ENCODE measurements at regions of chr15 and their contacts with region 1.

Region 1: DNA sequence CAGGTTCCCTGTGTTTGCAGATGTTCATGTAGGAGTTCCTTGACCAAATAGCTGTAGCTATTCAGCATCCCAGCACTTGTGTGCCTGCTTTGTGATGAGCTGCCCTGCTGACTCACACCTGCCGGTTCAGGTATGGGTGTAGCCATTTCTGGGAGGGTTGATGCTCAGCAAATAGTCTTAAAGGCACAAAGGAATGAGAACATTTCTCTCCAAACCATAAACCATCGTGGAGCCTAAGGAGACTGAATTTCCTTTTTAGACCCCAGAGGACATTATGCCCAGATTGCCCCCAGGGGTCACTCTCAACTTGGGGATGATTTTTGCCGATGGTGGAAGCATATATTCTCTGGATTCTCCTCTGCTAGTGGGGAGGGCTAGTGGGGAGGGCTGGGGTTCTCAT is 80.6 kb downstream of the ADAMTSL3 start:
- DNase-seq: peak in 2 of 4 experiments; percentile 1 to 10
- ATAC-seq: no peak
- H3K4me3 ChIP-seq: no peak overlapping the region
- H3K27ac ChIP-seq: no peak overlapping the region
- H3K4me1 ChIP-seq: no peaks in the 10 kb centered on the region
- H3K27me3 ChIP-seq: no peaks in the 10 kb centered on the region
- CTCF ChIP-seq: peak in 2 of 3 experiments; percentile 27 to 33; a peak in 2 of 6 replicates
- EP300 ChIP-seq: no peak
- POLR2A ChIP-seq: no peak
- RAD21 ChIP-seq: peak in 1 of 2 experiments; percentile 16; a peak in 1 of 4 replicates

Region 2: DNA sequence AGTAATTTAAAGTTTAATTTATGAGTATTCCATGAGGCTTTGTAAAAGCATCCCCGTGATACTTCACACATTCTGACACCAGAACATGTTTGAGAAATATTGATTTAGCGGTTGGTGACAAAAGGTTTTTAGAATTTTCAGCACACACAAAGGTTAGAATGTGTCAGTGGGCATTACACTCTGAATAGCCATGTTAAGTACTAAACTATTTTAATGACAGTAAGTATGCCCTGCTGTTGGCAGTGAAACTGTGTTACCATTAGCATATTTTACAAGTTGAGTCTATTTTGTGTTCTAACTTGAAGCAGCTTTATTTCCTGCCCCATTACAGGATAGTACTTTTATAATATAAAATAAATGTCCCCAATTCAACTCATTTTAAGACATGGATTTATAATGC is 14.0 kb before region 1 on chr15:
- CTCF ChIA-PET with region 1: no interaction called
- POLR2A ChIA-PET with region 1: no interaction called
- in situ Hi-C with region 1: no loop called
- intact Hi-C with region 1: no loop called
- DNase-seq: no peak
- ATAC-seq: no peak
- H3K4me3 ChIP-seq: no peak overlapping the region
- H3K27ac ChIP-seq: no peak overlapping the region
- H3K4me1 ChIP-seq: no peaks in the 10 kb centered on the region
- H3K27me3 ChIP-seq: no peaks in the 10 kb centered on the region; a peak in 1 of 5 replicates
- CTCF ChIP-seq: no peak
- EP300 ChIP-seq: no peak
- POLR2A ChIP-seq: no peak
- RAD21 ChIP-seq: no peak

Region 3: GRCh38 chr15:83904107-83905040 is 169.9 kb after region 1 on chr15:
- CTCF ChIA-PET with region 1: no interaction called
- POLR2A ChIA-PET with region 1: no interaction called
- in situ Hi-C with region 1: no loop called
- intact Hi-C with region 1: no loop called
- DNase-seq: no peak
- ATAC-seq: no peak
- H3K4me3 ChIP-seq: no peak overlapping the region
- H3K27ac ChIP-seq: no peak overlapping the region
- H3K4me1 ChIP-seq: no peaks in the 10 kb centered on the region
- H3K27me3 ChIP-seq: no peaks in the 10 kb centered on the region; a peak in 1 of 5 replicates
- CTCF ChIP-seq: no peak
- EP300 ChIP-seq: no peak
- POLR2A ChIP-seq: no peak
- RAD21 ChIP-seq: no peak

Region 4: GRCh38 chr15:84023636-84024035 is 289.1 kb after region 1 on chr15:
- CTCF ChIA-PET with region 1: no interaction called
- POLR2A ChIA-PET with region 1: no interaction called
- in situ Hi-C with region 1: no loop called
- intact Hi-C with region 1: loop called (anchors 10 kb)
- DNase-seq: peak; percentile 48 to 62 (median 60)
- ATAC-seq: peak; percentile 87
- H3K4me3 ChIP-seq: no peak overlapping the region
- H3K27ac ChIP-seq: no peak overlapping the region
- H3K4me1 ChIP-seq: no peaks in the 10 kb centered on the region
- H3K27me3 ChIP-seq: no peaks in the 10 kb centered on the region
- CTCF ChIP-seq: peak; percentile 57 to 68 (median 64)
- EP300 ChIP-seq: no peak
- POLR2A ChIP-seq: no peak
- RAD21 ChIP-seq: peak in 1 of 2 experiments; percentile 58; a peak in 2 of 4 replicates

Measured in K562 (cell line).